Activated B cell treated with CpG ODN at 0.5 μM for 24 hours (primary cell): ENCODE measurements at regions of chr2 and their contacts with region 1.

Region 1: DNA sequence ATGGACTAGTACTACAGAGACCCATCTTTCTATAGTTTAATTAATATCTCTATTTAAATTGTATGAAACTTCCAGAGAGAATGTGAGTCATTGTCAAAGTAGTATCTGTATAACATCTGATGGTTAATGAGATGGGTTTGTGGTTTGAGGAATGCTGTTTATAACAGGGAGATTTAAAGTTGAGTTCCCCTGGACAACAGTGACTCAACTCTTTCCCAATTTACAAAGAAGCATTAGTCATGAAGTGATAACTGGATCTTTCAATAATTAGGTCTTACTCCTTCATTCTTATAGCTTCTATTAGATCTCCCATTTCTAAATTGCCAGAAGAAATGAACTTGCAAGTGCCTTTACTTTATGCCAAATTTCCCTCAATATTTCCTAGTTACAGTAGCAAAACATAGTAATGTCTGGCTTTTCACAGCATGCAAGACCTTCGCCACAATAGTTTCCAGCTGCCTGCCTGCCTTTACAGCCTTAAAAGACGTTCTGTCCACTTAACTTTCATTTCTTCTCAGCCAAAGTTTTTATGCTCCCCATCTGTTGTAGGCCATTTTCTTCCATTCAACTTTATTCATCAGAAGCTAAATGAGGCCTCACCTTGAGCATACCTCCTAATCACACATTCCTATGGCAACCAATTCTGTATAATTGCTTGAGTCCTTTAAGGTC is 47.7 kb upstream of the WDR75 start:
- DNase-seq: no peak
- ATAC-seq: no peak
- H3K4me3 Mint-ChIP-seq: no peak overlapping the region
- H3K27ac Mint-ChIP-seq: no peak overlapping the region
- H3K4me1 Mint-ChIP-seq: no peaks in the 10 kb centered on the region
- H3K27me3 Mint-ChIP-seq: no peaks in the 10 kb centered on the region
- CTCF ChIP-seq: no peak

Region 2: DNA sequence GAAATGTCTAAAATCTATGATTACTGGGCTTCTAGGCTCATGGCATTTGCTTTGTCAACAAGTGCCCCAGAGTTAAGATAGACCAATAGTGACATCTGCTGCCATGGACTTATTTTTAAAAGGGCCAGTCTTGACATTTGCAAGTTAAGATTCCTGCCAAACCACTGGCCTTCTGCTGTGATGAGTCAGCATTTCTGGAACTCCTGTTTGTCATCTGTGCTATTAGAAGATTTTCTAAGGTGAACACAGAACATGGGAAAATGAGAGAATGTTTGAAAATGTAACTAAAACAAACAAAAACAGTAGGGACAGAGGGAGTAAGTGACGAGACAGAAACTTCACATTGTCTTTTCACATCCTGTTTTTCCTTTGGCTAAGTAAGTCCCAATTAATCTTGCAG is 46.0 kb before region 1 on chr2:
- CTCF ChIA-PET with region 1: no interaction called
- POLR2A ChIA-PET with region 1: no interaction called
- intact Hi-C with region 1: no loop called
- DNase-seq: no peak
- ATAC-seq: no peak
- H3K4me3 Mint-ChIP-seq: no peak overlapping the region
- H3K27ac Mint-ChIP-seq: no peak overlapping the region
- H3K4me1 Mint-ChIP-seq: no peaks in the 10 kb centered on the region
- H3K27me3 Mint-ChIP-seq: no peaks in the 10 kb centered on the region
- CTCF ChIP-seq: no peak

Region 3: GRCh38 chr2:189379287-189379630 is 14.3 kb before region 1 on chr2:
- CTCF ChIA-PET with region 1: no interaction called
- POLR2A ChIA-PET with region 1: no interaction called
- intact Hi-C with region 1: loop called (anchors 2 kb)
- DNase-seq: no peak
- ATAC-seq: no peak
- H3K4me3 Mint-ChIP-seq: no peak overlapping the region
- H3K27ac Mint-ChIP-seq: no peak overlapping the region
- H3K4me1 Mint-ChIP-seq: no peaks in the 10 kb centered on the region
- H3K27me3 Mint-ChIP-seq: peaks cover 2% of the 10 kb centered on the region
- CTCF ChIP-seq: no peak

Region 4: GRCh38 chr2:190179754-190180312 is 786.3 kb after region 1 on chr2:
- CTCF ChIA-PET with region 1: no interaction called
- POLR2A ChIA-PET with region 1: no interaction called
- intact Hi-C with region 1: no loop called
- DNase-seq: no peak
- ATAC-seq: no peak
- H3K4me3 Mint-ChIP-seq: peak overlapping the region; percentile 81
- H3K27ac Mint-ChIP-seq: peak overlapping the region; percentile 36
- H3K4me1 Mint-ChIP-seq: peaks cover 20% of the 10 kb centered on the region
- H3K27me3 Mint-ChIP-seq: no peaks in the 10 kb centered on the region
- CTCF ChIP-seq: no peak

Region 5: DNA sequence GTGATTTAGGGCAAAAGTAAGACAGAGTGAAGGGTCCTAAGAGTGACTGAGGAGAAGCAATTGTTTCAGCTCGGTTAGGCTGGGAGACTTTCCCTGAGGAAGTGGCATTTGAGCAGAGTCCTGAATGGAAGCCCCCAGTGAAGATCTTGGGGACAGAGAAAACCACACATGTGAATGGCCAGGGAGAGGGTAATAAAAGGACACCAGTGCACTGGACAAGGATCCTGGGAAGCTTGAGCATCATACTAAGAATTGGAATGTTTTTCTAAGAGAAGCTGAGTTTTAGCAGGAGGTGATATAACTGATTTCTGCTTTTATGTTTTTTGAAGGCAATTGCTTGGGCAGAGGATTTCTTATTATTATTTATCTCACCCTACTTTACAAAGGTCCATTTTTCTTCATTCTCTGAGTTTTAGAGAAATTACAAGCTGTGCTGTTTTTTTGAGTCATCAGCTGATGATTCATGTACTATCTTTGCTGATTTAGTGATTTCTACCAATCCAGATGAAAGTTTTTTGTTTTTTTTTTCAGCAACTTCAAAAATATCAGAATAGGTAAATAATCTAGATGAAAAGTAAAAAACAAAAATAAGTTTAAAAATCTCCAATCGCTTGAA is 1058.1 kb after region 1 on chr2:
- CTCF ChIA-PET with region 1: no interaction called
- POLR2A ChIA-PET with region 1: no interaction called
- intact Hi-C with region 1: no loop called
- DNase-seq: no peak
- ATAC-seq: no peak
- H3K4me3 Mint-ChIP-seq: no peak overlapping the region
- H3K27ac Mint-ChIP-seq: no peak overlapping the region
- H3K4me1 Mint-ChIP-seq: peaks cover 18% of the 10 kb centered on the region
- H3K27me3 Mint-ChIP-seq: no peaks in the 10 kb centered on the region
- CTCF ChIP-seq: no peak